HCT116 (cell line): ENCODE measurements at regions of chr11 and their contacts with region 1.

Region 1: GRCh38 chr11:44036811-44037657 is 10.7 kb upstream of the ACCSL start:
- DNase-seq: peak; percentile 61
- ATAC-seq: peak; percentile 98
- H3K4me3 ChIP-seq: no peak overlapping the region
- H3K27ac ChIP-seq: no peak overlapping the region
- H3K4me1 ChIP-seq: peaks cover 0 to 3% of the 10 kb centered on the region in 2 experiments; a peak in 1 of 4 replicates
- H3K27me3 ChIP-seq: no peaks in the 10 kb centered on the region
- CTCF ChIP-seq: peak; percentile 77 to 87 (median 83)
- POLR2A ChIP-seq: no peak
- RAD21 ChIP-seq: peak; percentile 90

Region 2: DNA sequence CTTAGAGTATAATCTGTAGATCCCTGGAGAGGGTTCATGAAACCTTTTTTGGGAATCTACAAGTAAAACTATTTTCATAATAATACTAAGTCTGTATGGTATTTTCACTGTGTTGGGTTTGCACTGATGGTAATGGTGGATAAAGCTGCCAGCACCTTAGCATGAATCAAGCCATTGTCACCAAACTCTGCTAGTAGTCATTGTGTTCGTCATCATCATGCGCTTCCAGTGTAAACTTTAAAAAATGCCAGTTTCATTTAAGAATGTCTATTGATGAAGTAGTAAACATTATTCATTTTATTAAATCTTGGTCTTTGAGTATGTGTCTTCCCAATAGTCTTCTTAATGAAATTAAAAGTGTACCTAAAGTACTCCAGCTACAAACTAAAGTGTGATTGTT is 141.4 kb before region 1 on chr11:
- CTCF ChIA-PET with region 1: interaction called, 4 read pairs
- POLR2A ChIA-PET with region 1: no interaction called
- RAD21 ChIA-PET with region 1: no interaction called
- intact Hi-C with region 1: loop called (anchors 1 kb)
- DNase-seq: no peak
- ATAC-seq: no peak
- H3K4me3 ChIP-seq: no peak overlapping the region
- H3K27ac ChIP-seq: no peak overlapping the region
- H3K4me1 ChIP-seq: no peaks in the 10 kb centered on the region
- H3K27me3 ChIP-seq: no peaks in the 10 kb centered on the region
- CTCF ChIP-seq: no peak
- POLR2A ChIP-seq: no peak
- RAD21 ChIP-seq: no peak

Region 3: GRCh38 chr11:43944761-43945311 is 92.2 kb before region 1 on chr11:
- CTCF ChIA-PET with region 1: interaction called, 4 read pairs
- POLR2A ChIA-PET with region 1: no interaction called
- RAD21 ChIA-PET with region 1: interaction called in 1 of 2 experiments, 3 read pairs
- intact Hi-C with region 1: loop called (anchors 1 kb)
- DNase-seq: no peak
- ATAC-seq: peak; percentile 81
- H3K4me3 ChIP-seq: peak overlapping the region; percentile 38 to 55
- H3K27ac ChIP-seq: no peak overlapping the region
- H3K4me1 ChIP-seq: peaks cover 0 to 12% of the 10 kb centered on the region in 2 experiments; a peak in 2 of 4 replicates
- H3K27me3 ChIP-seq: no peaks in the 10 kb centered on the region
- CTCF ChIP-seq: peak; percentile 80 to 99 (median 92)
- POLR2A ChIP-seq: no peak
- RAD21 ChIP-seq: peak; percentile 83

Region 4: DNA sequence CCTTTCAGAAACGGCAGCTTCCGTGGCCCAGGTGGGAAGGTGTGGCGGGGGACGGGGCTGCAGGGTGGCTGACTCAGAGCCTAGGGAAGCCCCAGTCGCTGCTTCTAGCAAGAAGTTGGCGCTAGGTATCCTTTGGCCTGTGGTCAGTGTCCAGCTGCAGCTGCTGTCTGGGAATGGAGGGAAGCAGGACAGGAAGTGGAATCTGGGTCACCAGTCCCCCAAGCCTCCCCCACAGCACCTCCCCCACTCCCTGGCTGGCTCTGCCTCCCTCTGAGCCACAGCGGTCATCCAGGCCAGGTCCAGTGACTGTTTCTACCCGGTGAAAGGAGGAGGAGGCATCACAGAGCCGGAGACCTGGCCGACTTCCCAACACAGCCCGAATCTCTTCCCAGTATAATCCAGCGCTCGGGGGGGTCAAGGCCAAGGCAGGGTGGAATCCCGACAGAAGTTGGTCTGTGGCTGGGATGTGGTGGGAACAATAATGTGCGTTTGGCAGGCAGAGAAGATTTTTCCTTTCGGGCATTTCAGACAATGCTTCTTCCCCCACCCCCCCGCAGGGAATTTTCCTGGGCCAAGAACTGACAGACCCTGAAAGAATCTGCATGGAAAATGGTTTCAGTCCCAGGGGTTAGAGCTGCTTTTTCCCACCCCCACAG is 49.5 kb before region 1 on chr11:
- CTCF ChIA-PET with region 1: no interaction called
- POLR2A ChIA-PET with region 1: no interaction called
- RAD21 ChIA-PET with region 1: no interaction called
- intact Hi-C with region 1: loop called (anchors 2 kb)
- DNase-seq: no peak
- ATAC-seq: no peak
- H3K4me3 ChIP-seq: no peak overlapping the region
- H3K27ac ChIP-seq: no peak overlapping the region
- H3K4me1 ChIP-seq: peaks cover 0 to 2% of the 10 kb centered on the region in 2 experiments; a peak in 1 of 4 replicates
- H3K27me3 ChIP-seq: no peaks in the 10 kb centered on the region
- CTCF ChIP-seq: no peak
- POLR2A ChIP-seq: no peak
- RAD21 ChIP-seq: no peak

Region 5: DNA sequence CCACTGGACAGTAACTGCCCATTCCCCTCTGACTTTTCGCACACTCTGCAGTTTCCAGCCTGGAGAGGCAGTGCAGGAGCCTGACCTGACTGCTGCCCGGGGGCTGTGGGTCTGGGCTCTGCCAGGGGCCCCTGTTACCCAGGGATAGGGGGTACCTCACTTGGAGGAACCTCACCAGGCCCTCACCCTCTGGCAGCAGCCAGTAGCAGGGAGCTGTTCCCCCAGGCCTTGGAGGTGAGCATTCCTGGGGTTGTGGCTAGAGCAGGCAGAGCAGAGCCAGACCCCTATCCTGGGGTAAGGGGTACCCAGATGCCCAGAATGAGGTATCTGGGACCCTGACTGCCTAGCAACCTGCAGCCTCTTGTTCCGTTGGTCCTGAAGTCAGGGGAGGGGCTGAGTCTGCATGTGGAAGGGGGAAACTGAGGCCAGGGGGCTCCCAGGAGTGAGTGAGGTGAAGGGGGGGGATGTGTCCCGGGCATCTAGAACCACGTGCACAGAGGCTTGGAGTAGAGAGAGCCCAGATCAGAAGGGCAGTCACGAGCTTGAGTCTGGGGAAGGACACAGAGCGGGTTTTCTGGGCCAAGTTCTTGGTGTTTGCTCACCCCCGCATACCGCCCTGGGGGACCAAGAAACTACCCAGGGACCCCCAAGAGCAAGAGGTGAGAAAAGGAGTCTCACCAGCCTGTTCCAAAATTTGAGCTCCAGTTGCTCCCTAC is 33.1 kb before region 1 on chr11:
- CTCF ChIA-PET with region 1: no interaction called
- POLR2A ChIA-PET with region 1: no interaction called
- RAD21 ChIA-PET with region 1: no interaction called
- intact Hi-C with region 1: no loop called
- DNase-seq: no peak
- ATAC-seq: no peak
- H3K4me3 ChIP-seq: no peak overlapping the region
- H3K27ac ChIP-seq: no peak overlapping the region
- H3K4me1 ChIP-seq: no peaks in the 10 kb centered on the region
- H3K27me3 ChIP-seq: no peaks in the 10 kb centered on the region
- CTCF ChIP-seq: no peak
- POLR2A ChIP-seq: no peak
- RAD21 ChIP-seq: no peak